ENCODE measurements at regions of chr10 and their contacts with region 1.

Region 1: GRCh38 chr10:77756319-77757232 is 119.0 kb upstream of the KCNMA1 start:
- DNase-seq: no peak
- H3K4me3 ChIP-seq: no peak overlapping the region
- H3K27ac ChIP-seq: no peak overlapping the region
- H3K4me1 ChIP-seq: no peaks in the 10 kb centered on the region
- H3K27me3 ChIP-seq: no peaks in the 10 kb centered on the region
- CTCF ChIP-seq: peak; percentile 39 to 64 (median 40)

Region 2: DNA sequence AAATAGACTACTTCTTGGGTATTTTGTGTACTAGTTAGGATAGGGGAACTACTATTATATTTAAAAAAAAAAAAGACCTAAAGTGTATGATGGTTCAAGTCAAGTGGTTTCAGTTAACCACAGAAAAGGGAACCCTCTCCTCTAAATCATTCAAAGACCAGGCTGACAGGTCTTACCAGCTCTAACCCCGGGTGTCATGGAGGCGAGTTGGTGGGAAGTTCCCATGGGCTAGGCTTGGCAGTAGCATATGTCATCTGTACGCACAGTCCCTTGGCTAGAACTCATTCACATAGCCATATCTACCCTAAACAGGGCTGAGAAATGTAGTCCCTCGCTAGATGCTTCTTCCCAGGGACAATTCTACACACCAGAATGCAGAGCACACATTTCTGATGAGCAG is 81.2 kb before region 1 on chr10:
- intact Hi-C with region 1: no loop called
- DNase-seq: no peak
- H3K4me3 ChIP-seq: no peak overlapping the region
- H3K27ac ChIP-seq: no peak overlapping the region
- H3K4me1 ChIP-seq: no peaks in the 10 kb centered on the region
- H3K27me3 ChIP-seq: no peaks in the 10 kb centered on the region
- CTCF ChIP-seq: no peak

Region 3: GRCh38 chr10:77718957-77719356 is 37.6 kb before region 1 on chr10:
- intact Hi-C with region 1: loop called (anchors 2 kb)
- DNase-seq: no peak
- H3K4me3 ChIP-seq: no peak overlapping the region
- H3K27ac ChIP-seq: no peak overlapping the region
- H3K4me1 ChIP-seq: no peaks in the 10 kb centered on the region
- H3K27me3 ChIP-seq: no peaks in the 10 kb centered on the region
- CTCF ChIP-seq: no peak

Measured in ascending aorta (tissue), 2 donors.